ENCODE measurements at regions of chr5 and their contacts with region 1.

Region 1: GRCh38 chr5:165349735-165350134 is 1844.3 kb downstream of the MAT2B start:
- DNase-seq: no peak
- H3K4me3 ChIP-seq: no peak overlapping the region
- H3K27ac ChIP-seq: no peak overlapping the region
- H3K4me1 ChIP-seq: no peaks in the 10 kb centered on the region
- H3K27me3 ChIP-seq: no peaks in the 10 kb centered on the region
- CTCF ChIP-seq: no peak

Region 2: DNA sequence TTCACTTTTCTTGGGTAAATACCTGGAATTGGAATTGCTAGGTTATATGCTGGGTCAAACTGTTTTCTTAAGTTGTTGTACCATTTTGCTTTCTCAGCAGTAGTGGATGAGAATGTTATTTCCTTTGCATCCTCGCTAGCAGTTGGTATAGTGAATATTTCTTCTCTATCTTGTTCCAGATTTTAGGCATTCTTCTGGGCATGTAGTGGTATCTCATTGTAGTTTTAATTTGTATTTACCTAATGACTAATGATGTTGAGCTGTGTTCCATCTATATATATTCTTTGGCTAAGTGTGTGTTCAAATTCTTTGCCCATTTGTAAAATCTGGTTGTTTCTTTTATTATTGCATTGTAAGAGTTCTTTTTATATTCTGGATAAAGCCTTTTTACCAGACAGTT is 1511.0 kb before region 1 on chr5:
- intact Hi-C with region 1: loop called (anchors 10 kb)
- DNase-seq: no peak
- H3K4me3 ChIP-seq: no peak overlapping the region
- H3K27ac ChIP-seq: no peak overlapping the region
- H3K4me1 ChIP-seq: no peaks in the 10 kb centered on the region
- H3K27me3 ChIP-seq: no peaks in the 10 kb centered on the region
- CTCF ChIP-seq: no peak

Measured in left ventricle myocardium inferior (tissue), 1 donor.